ENCODE measurements at regions of chr7 and their contacts with region 1.

Region 1: GRCh38 chr7:37352974-37353948 is 95.4 kb downstream of the ELMO1 start:
- DNase-seq: peak; percentile 84
- ATAC-seq: peak; percentile 72
- H3K4me3 ChIP-seq: peak overlapping the region; percentile 67 to 91 (median 79)
- H3K4me3 Mint-ChIP-seq: peak overlapping the region; percentile 95
- H3K27ac ChIP-seq: peak overlapping the region; percentile 8 to 81
- H3K27ac Mint-ChIP-seq: peak overlapping the region; percentile 88
- H3K4me1 ChIP-seq: peaks cover 35 to 42% of the 10 kb centered on the region in 2 donors
- H3K4me1 Mint-ChIP-seq: peaks cover 60% of the 10 kb centered on the region
- H3K27me3 ChIP-seq: no peaks in the 10 kb centered on the region
- H3K27me3 Mint-ChIP-seq: no peaks in the 10 kb centered on the region
- CTCF ChIP-seq: peak; percentile 93

Region 2: DNA sequence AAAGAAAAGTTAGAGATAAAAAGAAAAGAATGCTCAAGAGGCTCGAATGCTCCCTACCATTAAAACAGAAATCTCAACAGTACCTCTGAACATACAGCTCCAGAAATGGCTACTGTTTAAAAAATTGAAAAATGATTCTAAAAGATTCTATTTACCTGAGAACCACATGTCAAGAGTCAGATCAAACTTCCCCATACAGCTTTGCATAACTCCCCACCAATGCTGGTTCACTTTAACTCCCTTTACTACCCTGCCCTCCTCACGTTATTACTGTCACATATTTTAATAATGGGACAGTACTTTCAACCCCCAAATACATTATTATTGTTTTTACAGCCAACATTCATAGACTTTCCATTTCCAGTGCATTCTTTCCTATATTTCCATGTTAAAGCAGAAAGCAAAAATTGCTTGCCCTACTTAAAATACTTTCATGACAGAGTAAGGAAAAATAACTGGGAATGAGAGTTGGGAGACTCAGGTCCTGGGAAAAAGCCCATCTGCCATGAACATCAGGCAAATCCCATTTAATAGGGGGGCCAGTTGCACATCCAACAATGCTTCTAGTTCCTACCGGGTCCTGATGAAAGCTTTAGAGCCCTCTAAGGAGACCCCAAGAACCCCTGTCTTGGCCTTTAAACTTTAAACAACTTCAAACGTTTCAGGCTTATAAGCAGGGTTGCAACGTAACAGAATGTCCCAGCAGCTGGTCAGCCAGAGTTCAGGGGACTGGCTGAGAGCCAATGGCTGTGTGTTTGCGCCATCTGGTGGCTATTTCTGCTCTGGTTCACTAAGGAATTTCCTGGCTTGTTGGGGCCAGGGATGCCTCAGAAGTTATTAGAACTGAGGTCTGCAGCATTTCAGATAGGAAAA is 152.0 kb before region 1 on chr7:
- CTCF ChIA-PET with region 1: interaction called, 56 read pairs
- POLR2A ChIA-PET with region 1: no interaction called
- intact Hi-C with region 1: loop called (anchors 2 kb)
- DNase-seq: peak; percentile 52
- ATAC-seq: peak; percentile 36
- H3K4me3 ChIP-seq: no peak overlapping the region
- H3K4me3 Mint-ChIP-seq: no peak overlapping the region
- H3K27ac ChIP-seq: no peak overlapping the region
- H3K27ac Mint-ChIP-seq: no peak overlapping the region
- H3K4me1 ChIP-seq: peaks cover 3 to 9% of the 10 kb centered on the region in 2 donors
- H3K4me1 Mint-ChIP-seq: peaks cover 25% of the 10 kb centered on the region
- H3K27me3 ChIP-seq: no peaks in the 10 kb centered on the region
- H3K27me3 Mint-ChIP-seq: no peaks in the 10 kb centered on the region
- CTCF ChIP-seq: peak; percentile 66

Region 3: DNA sequence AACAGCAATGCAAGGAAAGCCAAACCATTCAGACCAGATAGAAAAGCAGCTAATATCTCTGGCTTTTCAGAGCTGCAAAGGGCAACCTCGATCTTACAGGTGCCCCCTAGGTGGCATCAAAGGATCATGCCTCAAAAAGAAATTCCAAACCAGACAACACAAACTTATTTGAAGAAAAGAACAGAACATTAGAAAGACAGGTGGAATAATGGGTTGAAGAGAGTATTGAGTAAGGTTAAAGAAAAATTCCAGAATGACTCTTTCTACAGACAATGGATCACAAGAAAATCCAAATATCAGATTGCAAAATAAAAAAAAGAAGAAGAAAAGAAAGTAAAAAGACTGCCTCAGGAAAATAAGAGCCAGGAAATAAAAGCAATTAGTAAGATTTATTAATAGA is 118.3 kb before region 1 on chr7:
- CTCF ChIA-PET with region 1: interaction called, 186 read pairs
- POLR2A ChIA-PET with region 1: no interaction called
- intact Hi-C with region 1: loop called (anchors 1 kb)
- DNase-seq: peak; percentile 58
- ATAC-seq: peak; percentile 24
- H3K4me3 ChIP-seq: no peak overlapping the region
- H3K4me3 Mint-ChIP-seq: no peak overlapping the region
- H3K27ac ChIP-seq: no peak overlapping the region
- H3K27ac Mint-ChIP-seq: no peak overlapping the region
- H3K4me1 ChIP-seq: no peaks in the 10 kb centered on the region
- H3K4me1 Mint-ChIP-seq: peaks cover 2% of the 10 kb centered on the region
- H3K27me3 ChIP-seq: no peaks in the 10 kb centered on the region
- H3K27me3 Mint-ChIP-seq: no peaks in the 10 kb centered on the region
- CTCF ChIP-seq: peak; percentile 81

Region 4: DNA sequence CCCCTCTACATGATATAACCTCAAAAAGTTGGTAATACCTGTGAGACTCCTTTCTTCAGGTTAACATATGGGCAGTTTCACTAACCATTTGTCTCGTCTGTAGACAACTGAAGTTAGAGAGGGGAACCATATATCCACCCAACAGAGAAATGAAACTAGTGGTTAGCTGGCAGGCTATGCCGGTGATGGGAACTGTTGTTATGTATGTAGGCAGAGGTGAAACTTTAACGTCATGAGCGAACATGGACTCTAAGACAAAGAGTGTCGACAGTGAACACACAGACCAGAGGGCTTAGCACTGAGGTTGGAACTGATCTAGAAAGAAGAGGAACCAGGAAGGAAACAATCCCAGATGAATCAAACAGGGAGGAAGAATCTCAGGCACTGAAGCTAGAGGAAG is 17.0 kb before region 1 on chr7:
- CTCF ChIA-PET with region 1: interaction called, 14 read pairs
- POLR2A ChIA-PET with region 1: interaction called, 5 read pairs
- intact Hi-C with region 1: loop called (anchors 2 kb)
- DNase-seq: peak; percentile 87
- ATAC-seq: peak; percentile 94
- H3K4me3 ChIP-seq: peak overlapping the region in 4 of 5 experiments; percentile 9 to 46 (median 28)
- H3K4me3 Mint-ChIP-seq: peak overlapping the region; percentile 83
- H3K27ac ChIP-seq: peak overlapping the region; percentile 79 to 89
- H3K27ac Mint-ChIP-seq: peak overlapping the region; percentile 95
- H3K4me1 ChIP-seq: peaks cover 38 to 51% of the 10 kb centered on the region in 2 donors
- H3K4me1 Mint-ChIP-seq: peaks cover 86% of the 10 kb centered on the region
- H3K27me3 ChIP-seq: no peaks in the 10 kb centered on the region
- H3K27me3 Mint-ChIP-seq: no peaks in the 10 kb centered on the region
- CTCF ChIP-seq: no peak

Region 5: DNA sequence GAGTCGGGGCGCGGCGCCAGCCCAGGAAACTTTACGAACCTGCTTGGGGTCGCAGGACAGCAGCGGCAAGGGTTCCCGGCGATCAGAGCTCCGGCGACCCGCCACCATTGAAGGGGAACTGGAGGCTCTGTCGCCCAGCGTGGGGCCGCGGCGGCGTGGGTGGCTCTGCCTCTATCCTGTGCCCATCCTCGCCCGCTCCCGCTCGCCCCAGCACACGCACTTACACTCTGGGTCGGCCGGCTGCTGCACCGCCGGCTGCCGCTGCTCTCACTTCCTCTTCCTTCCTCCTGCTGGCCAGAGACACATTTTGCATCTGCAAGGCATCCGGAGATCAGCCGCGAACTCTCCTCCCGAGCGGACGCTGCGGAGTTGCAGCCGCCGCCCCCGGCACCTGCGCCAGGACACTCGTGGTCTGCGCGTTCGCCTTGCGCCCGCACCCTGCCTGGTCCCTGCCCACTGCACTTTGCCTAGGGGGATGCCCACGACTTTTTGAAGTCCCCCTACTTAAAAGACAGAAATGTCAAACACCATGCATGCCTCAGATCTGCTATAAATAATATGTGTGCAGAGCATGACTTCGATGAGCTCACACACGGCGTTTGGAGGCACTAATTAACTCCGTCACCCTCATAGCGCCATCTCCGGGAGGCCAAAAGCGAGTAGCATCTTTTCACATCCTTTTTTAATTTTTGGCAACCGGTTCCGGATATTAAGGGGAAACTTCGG is 95.5 kb after region 1 on chr7 and contains the start of gene ELMO1:
- CTCF ChIA-PET with region 1: interaction called, 67 read pairs
- POLR2A ChIA-PET with region 1: interaction called, 12 read pairs
- intact Hi-C with region 1: loop called (anchors 1 kb)
- DNase-seq: peak; percentile 95
- ATAC-seq: peak; percentile 79
- H3K4me3 ChIP-seq: peak within 1 kb of the TSS; percentile 68 to 94 (median 83)
- H3K4me3 Mint-ChIP-seq: peak within 1 kb of the TSS; percentile 94
- H3K27ac ChIP-seq: peak within 1 kb of the TSS; percentile 83 to 93
- H3K27ac Mint-ChIP-seq: peak within 1 kb of the TSS; percentile 99
- H3K4me1 ChIP-seq: peaks cover 16 to 18% of the 10 kb centered on the region in 2 donors
- H3K4me1 Mint-ChIP-seq: peaks cover 47% of the 10 kb centered on the region
- H3K27me3 ChIP-seq: no peaks in the 10 kb centered on the region
- H3K27me3 Mint-ChIP-seq: no peaks in the 10 kb centered on the region
- CTCF ChIP-seq: peak; percentile 37
- total RNA-seq, gene ELMO1: 166 and 177 TPM in 2 replicates